ENCODE measurements at regions of chr6 and their contacts with region 1.

Region 1: DNA sequence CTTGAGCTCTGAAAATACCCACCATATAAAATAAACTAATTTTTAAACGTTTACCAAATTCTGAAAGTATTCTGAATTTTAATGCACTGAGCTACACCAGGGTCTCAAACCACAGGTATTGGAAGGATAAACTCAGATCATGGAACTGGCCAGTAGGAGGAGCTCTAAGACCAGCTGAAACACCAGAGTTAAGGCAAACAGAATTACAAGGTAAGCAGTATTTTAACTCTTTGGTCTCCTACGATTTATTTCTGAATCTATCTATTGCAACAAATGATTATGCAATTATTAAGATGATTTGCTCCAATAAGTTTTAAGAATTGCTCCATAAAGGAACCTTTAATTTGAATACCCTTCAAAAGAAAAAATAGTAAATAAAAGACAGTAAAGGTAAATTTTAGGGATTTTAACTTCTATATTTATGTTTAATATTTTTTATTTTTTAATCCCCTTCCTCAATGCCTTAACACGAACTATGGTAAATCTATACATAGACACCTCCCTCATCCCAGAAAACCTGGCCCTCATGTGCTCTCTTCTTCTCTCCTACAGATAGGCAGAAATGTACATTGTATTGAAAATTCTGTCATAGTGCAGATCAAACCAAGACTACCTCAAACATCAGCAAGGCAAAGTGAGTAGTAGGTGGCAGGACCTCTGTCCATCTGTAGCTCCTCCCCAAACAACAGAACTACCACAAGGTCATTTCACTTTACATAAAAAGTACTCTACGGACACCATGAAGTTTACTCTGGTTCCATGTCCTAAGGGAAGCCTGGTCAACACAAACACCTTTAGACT is 58.4 kb downstream of the SMLR1 start:
- DNase-seq: peak; percentile 73 to 85
- H3K4me3 ChIP-seq: no peak overlapping the region
- H3K4me1 ChIP-seq: no peaks in the 10 kb centered on the region; the same call in 1 of the 2 replicates
- H3K27me3 ChIP-seq: no peaks in the 10 kb centered on the region

Region 2: GRCh38 chr6:130282234-130282995 is 603.2 kb before region 1 on chr6:
- in situ Hi-C with region 1: no loop called
- DNase-seq: peak; percentile 13 to 26
- H3K4me3 ChIP-seq: no peak overlapping the region
- H3K4me1 ChIP-seq: no peaks in the 10 kb centered on the region
- H3K27me3 ChIP-seq: no peaks in the 10 kb centered on the region

Region 3: GRCh38 chr6:130749402-130749801 is 136.2 kb before region 1 on chr6:
- in situ Hi-C with region 1: no loop called
- DNase-seq: peak in 1 of 2 experiments; percentile 9
- H3K4me3 ChIP-seq: no peak overlapping the region
- H3K4me1 ChIP-seq: no peaks in the 10 kb centered on the region; the same call in 1 of the 2 replicates
- H3K27me3 ChIP-seq: no peaks in the 10 kb centered on the region

Region 4: DNA sequence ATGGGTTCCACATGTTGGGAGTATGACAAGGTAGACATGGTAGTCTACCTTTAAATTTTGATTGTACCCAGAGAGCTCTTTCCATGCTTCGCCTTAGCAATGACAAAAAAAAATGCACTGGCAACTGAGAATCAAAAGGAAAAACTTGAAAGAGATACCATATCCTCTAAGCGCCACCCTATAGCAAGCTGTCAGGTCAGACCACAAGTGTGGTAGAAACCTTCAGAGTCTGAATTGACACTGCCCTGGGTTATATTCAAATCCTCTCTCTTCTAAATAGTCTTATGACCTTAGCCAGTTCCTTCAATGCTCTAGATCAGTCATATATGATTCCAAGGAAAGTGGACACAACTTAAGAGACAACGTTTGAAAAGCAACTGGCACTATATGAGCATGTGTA is 104.0 kb before region 1 on chr6:
- in situ Hi-C with region 1: no loop called
- DNase-seq: no peak
- H3K4me3 ChIP-seq: no peak overlapping the region
- H3K4me1 ChIP-seq: no peaks in the 10 kb centered on the region
- H3K27me3 ChIP-seq: no peaks in the 10 kb centered on the region

Region 5: GRCh38 chr6:130923350-130923749 is 37.8 kb after region 1 on chr6:
- in situ Hi-C with region 1: no loop called
- DNase-seq: no peak
- H3K4me3 ChIP-seq: no peak overlapping the region
- H3K4me1 ChIP-seq: 0 out of 2 replicates have a peak, but pooled peaks cover 2% of the 10 kb centered on the region
- H3K27me3 ChIP-seq: no peaks in the 10 kb centered on the region; the same call in 1 of the 2 replicates

Region 6: GRCh38 chr6:131107151-131107550 is 221.6 kb after region 1 on chr6:
- in situ Hi-C with region 1: loop called (anchors 10 kb)
- DNase-seq: no peak
- H3K4me3 ChIP-seq: no peak overlapping the region
- H3K4me1 ChIP-seq: no peaks in the 10 kb centered on the region
- H3K27me3 ChIP-seq: peaks cover 3% of the 10 kb centered on the region; the same call in 1 of the 2 replicates

Region 7: DNA sequence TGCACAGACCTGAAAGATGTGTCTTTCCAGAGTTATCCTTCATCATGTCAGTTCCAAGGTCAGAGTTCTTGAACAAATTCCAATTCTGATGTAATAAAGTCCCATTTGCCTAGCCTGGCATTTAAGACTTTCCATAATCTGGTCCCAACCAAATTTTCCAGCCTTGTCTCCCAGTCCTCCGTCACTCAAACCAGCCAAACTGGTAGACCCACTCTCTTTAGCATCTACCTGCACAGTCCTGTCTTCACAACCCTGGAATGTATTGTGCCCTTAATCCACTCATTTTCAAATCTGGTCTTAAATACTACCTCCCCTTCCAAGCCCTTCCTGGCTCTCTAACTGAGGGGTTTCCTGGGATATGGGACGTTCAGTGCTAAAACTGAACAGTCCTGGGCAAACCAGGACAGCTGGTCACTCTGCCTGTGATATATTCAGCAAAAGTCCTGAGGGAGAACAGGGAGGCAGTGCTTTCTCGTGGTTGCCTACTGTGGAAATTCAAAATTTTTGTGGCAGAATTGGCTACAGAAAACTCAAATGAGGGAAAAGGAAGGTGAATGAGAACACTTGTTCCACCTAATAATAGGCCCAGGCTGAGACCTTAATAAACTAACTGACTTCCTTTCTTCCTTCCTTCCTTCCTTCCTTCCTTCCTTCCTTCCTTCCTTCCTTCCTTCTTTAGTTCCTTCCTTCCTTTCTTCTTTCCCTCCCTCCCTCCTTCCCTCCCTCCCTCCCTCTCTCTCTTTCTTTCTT is 238.9 kb after region 1 on chr6:
- in situ Hi-C with region 1: loop called (anchors 5 kb)
- DNase-seq: no peak
- H3K4me3 ChIP-seq: no peak overlapping the region
- H3K4me1 ChIP-seq: peaks cover 8% of the 10 kb centered on the region
- H3K27me3 ChIP-seq: no peaks in the 10 kb centered on the region

Region 8: GRCh38 chr6:131519670-131520436 is 634.3 kb after region 1 on chr6:
- in situ Hi-C with region 1: loop called (anchors 10 kb)
- DNase-seq: peak; percentile 47 to 63
- H3K4me3 ChIP-seq: no peak overlapping the region
- H3K4me1 ChIP-seq: no peaks in the 10 kb centered on the region
- H3K27me3 ChIP-seq: no peaks in the 10 kb centered on the region